CD8-positive, alpha-beta T cell (primary cell): ENCODE measurements at regions of chr1 and their contacts with region 1.

Region 1: DNA sequence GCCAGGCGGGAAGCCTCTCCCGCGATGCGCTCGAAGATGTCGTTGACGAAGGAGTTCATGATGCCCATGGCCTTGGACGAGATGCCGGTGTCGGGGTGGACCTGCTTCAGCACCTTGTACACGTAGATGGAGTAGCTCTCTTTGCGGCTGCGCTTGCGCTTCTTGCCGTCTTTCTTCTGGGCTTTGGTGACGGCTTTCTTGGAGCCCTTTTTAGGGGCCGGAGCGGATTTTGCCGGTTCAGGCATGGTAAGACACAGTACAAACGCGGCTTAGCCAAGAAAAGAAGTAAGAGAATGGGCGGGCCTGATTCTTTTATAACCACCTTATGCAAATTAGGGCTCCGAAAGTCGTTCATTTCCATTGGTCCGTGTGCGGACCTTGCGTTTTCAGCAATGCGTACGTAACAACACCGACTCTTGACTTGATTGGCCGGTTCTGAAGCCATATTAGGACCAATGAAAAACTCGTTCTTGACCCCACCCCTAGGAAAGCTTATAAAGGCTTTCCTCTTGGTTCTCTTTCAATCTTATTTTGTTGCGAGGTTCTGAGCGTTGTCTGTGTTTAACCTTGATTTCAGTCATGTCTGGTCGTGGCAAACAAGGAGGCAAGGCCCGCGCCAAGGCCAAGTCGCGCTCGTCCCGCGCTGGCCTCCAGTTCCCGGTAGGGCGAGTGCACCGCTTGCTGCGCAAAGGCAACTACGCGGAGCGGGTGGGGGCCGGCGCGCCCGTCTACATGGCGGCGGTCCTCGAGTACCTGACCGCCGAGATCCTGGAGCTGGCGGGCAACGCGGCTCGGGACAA is 12.8 kb upstream of the BOLA1 start:
- DNase-seq: peak; percentile 73 to 99 (median 82)
- ATAC-seq: peak; percentile 64
- H3K4me3 ChIP-seq: peak overlapping the region; percentile 69 to 74
- H3K4me3 Mint-ChIP-seq: no peak overlapping the region
- H3K27ac ChIP-seq: peak overlapping the region; percentile 91 to 95
- H3K27ac Mint-ChIP-seq: no peak overlapping the region
- H3K4me1 ChIP-seq: peaks cover 32% of the 10 kb centered on the region
- H3K4me1 Mint-ChIP-seq: peaks cover 13% of the 10 kb centered on the region
- H3K27me3 ChIP-seq: no peaks in the 10 kb centered on the region
- H3K27me3 Mint-ChIP-seq: no peaks in the 10 kb centered on the region
- CTCF ChIP-seq: no peak

Region 2: DNA sequence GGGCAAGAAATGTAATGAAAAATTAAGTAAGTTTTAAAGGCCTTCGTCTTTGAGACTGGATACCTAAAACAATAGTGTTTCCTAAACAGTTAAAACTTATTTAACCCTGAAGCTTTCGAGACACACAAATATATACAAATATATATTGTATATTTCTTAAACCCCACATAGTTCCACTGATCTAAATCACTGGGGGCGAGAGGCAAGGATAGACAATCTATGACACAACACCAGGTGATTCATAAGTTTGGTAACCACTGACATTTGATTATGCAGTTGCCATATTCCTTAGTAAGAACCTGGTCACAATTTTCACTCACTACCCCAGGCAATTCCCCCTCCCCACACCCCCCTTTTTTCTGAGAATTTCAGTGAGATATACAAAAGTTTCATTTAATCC is 42.5 kb before region 1 on chr1:
- CTCF ChIA-PET with region 1: interaction called, 5 read pairs
- POLR2A ChIA-PET with region 1: interaction called, 168 read pairs
- intact Hi-C with region 1: no loop called
- DNase-seq: peak in 4 of 9 experiments; percentile 13 to 56 (median 30)
- ATAC-seq: no peak
- H3K4me3 ChIP-seq: peak overlapping the region; percentile 49 to 57
- H3K4me3 Mint-ChIP-seq: peak overlapping the region; percentile 85
- H3K27ac ChIP-seq: peak overlapping the region; percentile 43 to 62
- H3K27ac Mint-ChIP-seq: peak overlapping the region; percentile 93
- H3K4me1 ChIP-seq: peaks cover 43% of the 10 kb centered on the region
- H3K4me1 Mint-ChIP-seq: peaks cover 51% of the 10 kb centered on the region
- H3K27me3 ChIP-seq: no peaks in the 10 kb centered on the region
- H3K27me3 Mint-ChIP-seq: no peaks in the 10 kb centered on the region
- CTCF ChIP-seq: no peak

Region 3: DNA sequence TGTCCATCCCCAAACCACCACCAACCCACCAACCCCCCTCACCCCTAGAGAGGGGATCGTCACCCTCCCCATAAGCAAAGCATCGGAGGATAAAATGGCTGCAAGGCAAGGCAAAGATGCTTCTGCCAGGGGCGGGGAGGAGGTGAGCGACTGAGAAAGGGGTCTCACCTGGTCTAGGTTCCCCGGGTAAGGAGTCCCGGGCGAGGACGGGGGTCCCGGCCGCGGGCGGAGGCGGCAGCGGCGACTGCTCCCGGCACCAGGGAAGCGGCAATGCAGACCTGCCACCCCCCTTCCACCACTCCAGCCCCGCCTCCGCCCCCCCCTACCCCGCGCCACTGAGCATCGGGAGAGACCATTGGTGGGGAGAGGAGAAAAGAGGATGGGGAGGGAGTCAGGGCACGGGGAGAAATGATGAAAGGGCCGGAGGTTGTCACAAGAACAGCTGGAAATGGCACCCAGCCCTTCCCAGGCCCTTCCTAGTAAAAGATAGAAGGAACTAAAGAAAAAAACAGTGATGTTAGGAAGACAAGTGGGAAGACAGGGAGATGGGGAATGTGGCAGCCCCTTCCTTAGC is 31.1 kb after region 1 on chr1 and contains the start of gene SV2A:
- CTCF ChIA-PET with region 1: interaction called, 3 read pairs
- POLR2A ChIA-PET with region 1: interaction called, 29 read pairs
- intact Hi-C with region 1: no loop called
- DNase-seq: peak in 8 of 9 experiments; percentile 12 to 68 (median 52)
- ATAC-seq: peak; percentile 81
- H3K4me3 ChIP-seq: peak within 1 kb of the TSS; percentile 57 to 66
- H3K4me3 Mint-ChIP-seq: peak within 1 kb of the TSS; percentile 90
- H3K27ac ChIP-seq: no peak within 1 kb of the TSS
- H3K27ac Mint-ChIP-seq: peak within 1 kb of the TSS; percentile 49
- H3K4me1 ChIP-seq: peaks cover 34% of the 10 kb centered on the region
- H3K4me1 Mint-ChIP-seq: peaks cover 46% of the 10 kb centered on the region
- H3K27me3 ChIP-seq: no peaks in the 10 kb centered on the region
- H3K27me3 Mint-ChIP-seq: no peaks in the 10 kb centered on the region
- CTCF ChIP-seq: no peak
- total RNA-seq, gene SV2A: 2.9 to 3.3 TPM

Region 4: DNA sequence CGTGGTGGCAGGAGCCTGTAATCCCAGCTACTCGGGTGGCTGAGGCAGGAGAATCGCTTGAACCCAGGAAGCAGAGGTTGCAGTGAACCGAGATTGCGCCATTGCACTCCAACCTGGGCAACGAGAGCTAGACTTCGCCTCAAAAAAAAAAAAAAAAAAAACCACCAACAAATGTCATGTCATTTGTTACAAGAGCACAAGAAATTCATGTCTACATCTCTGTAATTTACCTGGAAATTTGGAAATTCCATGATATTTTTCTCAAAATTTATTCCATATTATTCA is 164.4 kb after region 1 on chr1:
- CTCF ChIA-PET with region 1: interaction called, 3 read pairs
- POLR2A ChIA-PET with region 1: interaction called, 11 read pairs
- intact Hi-C with region 1: loop called (anchors 1 kb)
- DNase-seq: no peak
- ATAC-seq: no peak
- H3K4me3 ChIP-seq: no peak overlapping the region
- H3K4me3 Mint-ChIP-seq: no peak overlapping the region
- H3K27ac ChIP-seq: no peak overlapping the region
- H3K27ac Mint-ChIP-seq: no peak overlapping the region
- H3K4me1 ChIP-seq: no peaks in the 10 kb centered on the region
- H3K4me1 Mint-ChIP-seq: peaks cover 3% of the 10 kb centered on the region
- H3K27me3 ChIP-seq: peaks cover 0 to 3% of the 10 kb centered on the region in 2 experiments
- H3K27me3 Mint-ChIP-seq: peaks cover 4% of the 10 kb centered on the region
- CTCF ChIP-seq: no peak

Region 5: DNA sequence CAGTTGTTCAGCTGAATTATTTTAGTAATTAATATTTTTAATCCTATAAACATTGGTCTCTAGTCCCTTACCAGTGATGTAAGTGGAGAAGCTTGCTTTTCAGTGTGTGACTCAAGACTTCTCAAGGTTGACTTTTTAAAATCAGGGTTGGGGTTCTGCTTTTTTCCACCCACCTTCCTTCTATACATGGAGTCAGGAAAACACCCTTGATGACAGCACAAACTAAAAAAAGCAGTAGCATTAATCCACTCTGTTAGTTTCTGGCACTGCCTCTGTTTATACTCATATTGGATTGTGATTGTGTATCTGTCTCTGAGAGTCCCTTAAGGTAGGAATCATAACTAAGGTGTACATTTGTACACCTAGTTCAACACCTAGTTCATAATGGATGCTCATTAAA is 254.9 kb after region 1 on chr1:
- CTCF ChIA-PET with region 1: no interaction called
- POLR2A ChIA-PET with region 1: no interaction called
- intact Hi-C with region 1: no loop called
- DNase-seq: no peak
- ATAC-seq: no peak
- H3K4me3 ChIP-seq: no peak overlapping the region
- H3K4me3 Mint-ChIP-seq: no peak overlapping the region
- H3K27ac ChIP-seq: no peak overlapping the region
- H3K27ac Mint-ChIP-seq: no peak overlapping the region
- H3K4me1 ChIP-seq: peaks cover 4% of the 10 kb centered on the region
- H3K4me1 Mint-ChIP-seq: peaks cover 12% of the 10 kb centered on the region
- H3K27me3 ChIP-seq: no peaks in the 10 kb centered on the region
- H3K27me3 Mint-ChIP-seq: no peaks in the 10 kb centered on the region
- CTCF ChIP-seq: no peak

Region 6: GRCh38 chr1:150162862-150163706 is 276.5 kb after region 1 on chr1:
- CTCF ChIA-PET with region 1: no interaction called
- POLR2A ChIA-PET with region 1: interaction called, 10 read pairs
- intact Hi-C with region 1: no loop called
- DNase-seq: peak in 1 of 9 experiments; percentile 46
- ATAC-seq: peak; percentile 45
- H3K4me3 ChIP-seq: no peak overlapping the region
- H3K4me3 Mint-ChIP-seq: peak overlapping the region; percentile 6
- H3K27ac ChIP-seq: no peak overlapping the region
- H3K27ac Mint-ChIP-seq: peak overlapping the region; percentile 10
- H3K4me1 ChIP-seq: peaks cover 46% of the 10 kb centered on the region
- H3K4me1 Mint-ChIP-seq: peaks cover 43% of the 10 kb centered on the region
- H3K27me3 ChIP-seq: no peaks in the 10 kb centered on the region
- H3K27me3 Mint-ChIP-seq: no peaks in the 10 kb centered on the region
- CTCF ChIP-seq: no peak

Region 7: DNA sequence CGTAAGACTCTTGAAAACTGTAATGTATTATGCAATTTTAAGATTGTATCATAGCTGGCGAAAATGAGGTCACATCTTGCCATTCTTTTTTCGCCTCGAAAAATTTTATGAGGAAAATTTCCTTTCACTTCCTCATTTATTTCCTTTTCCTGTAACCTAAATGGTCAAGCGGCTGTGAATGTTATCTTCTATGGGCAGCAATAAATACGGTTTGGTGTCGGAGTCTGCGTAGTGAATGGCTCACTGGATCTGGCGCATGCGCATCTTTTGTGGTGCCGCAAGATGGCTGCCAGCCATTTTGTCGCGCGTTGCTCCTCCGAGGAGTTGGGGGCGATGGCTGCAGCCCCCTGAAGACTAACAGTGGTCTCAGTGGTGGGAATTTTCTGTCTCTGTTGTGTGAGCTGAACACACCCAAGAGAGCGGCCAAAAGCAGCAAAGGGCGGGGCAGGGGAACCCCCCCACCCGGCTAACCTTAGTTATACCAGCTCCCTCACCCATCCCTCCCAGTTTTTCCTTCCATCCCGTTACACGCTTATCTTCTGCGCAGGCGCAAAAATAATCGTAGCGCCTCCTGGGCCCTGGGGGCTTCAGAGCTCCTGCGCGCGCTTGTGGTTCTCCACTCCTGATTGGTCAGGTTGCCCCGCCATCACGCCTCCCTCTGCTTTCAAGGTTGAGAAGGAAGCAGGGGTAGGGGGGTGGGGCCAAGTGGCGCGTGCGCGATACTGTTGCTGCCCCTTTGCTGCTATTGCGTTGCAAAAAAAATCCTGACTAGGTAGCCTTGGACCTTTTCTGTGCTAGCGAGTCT is 477.0 kb after region 1 on chr1 and contains the start of gene RPRD2:
- CTCF ChIA-PET with region 1: no interaction called
- POLR2A ChIA-PET with region 1: interaction called, 22 read pairs
- intact Hi-C with region 1: no loop called
- DNase-seq: peak; percentile 97 to 100 (median 98)
- ATAC-seq: peak; percentile 95
- H3K4me3 ChIP-seq: peak within 1 kb of the TSS; percentile 69 to 90
- H3K4me3 Mint-ChIP-seq: peak within 1 kb of the TSS; percentile 99
- H3K27ac ChIP-seq: peak within 1 kb of the TSS; percentile 74 to 94
- H3K27ac Mint-ChIP-seq: peak within 1 kb of the TSS; percentile 99
- H3K4me1 ChIP-seq: peaks cover 7% of the 10 kb centered on the region
- H3K4me1 Mint-ChIP-seq: peaks cover 36% of the 10 kb centered on the region
- H3K27me3 ChIP-seq: no peaks in the 10 kb centered on the region
- H3K27me3 Mint-ChIP-seq: no peaks in the 10 kb centered on the region
- CTCF ChIP-seq: no peak
- total RNA-seq, gene RPRD2: 31.8 to 35.0 TPM